A549 (cell line): ENCODE measurements at regions of chr2 and their contacts with region 1.

Region 1: DNA sequence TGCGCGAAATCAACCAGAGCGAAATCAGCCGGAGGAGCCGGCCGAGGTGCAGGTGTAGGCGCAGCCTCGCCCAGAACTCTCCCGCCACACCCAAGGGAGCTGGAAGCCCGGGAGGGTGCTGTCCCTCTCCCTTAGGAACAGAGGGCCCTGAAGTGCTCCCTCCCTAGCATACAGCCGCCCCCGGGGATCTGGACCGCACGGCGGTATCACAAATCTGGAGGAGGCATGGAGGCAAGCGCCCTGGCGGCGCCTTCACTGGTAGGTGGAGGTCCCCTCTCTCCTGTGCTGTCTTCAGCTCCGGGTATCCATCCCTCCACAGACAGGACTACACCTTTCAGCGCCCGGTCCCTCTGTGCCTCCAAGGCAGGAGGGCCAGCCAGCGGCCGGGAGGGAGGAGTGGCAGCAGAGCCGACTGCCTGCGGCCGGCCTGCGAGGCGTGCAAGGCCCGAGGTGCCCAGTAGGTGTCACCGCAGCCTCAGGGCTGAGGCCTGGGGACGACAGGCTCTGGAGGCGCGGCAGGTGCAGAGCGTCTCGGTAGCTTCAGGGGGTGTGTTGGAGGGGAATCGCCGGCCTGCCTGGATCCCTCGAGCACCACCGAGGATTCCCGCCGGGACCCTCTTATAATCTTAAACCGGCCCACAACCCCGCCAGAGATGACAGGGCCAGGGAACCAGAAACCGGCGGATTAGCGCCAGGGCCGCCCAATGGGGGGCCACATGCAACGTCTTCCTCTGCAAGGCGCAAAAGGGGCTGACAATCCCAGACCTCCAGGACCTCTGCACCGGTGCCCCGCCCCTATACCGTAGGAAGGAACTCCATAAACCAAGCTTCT is 2.8 kb downstream of the IHH start:
- DNase-seq: peak in 1 of 2 experiments; percentile 60
- ATAC-seq: peak; percentile 72 to 86
- H3K4me3 ChIP-seq: peak overlapping the region; percentile 53; the same call in 2 of the 3 replicates
- H3K27ac ChIP-seq: no peak overlapping the region
- H3K4me1 ChIP-seq: peaks cover 26% of the 10 kb centered on the region
- CTCF ChIP-seq: peak; percentile 80
- EP300 ChIP-seq: no peak
- POLR2A ChIP-seq: no peak
- RAD21 ChIP-seq: peak; percentile 80 to 91

Region 2: GRCh38 chr2:219002395-219003266 is 55.3 kb before region 1 on chr2:
- CTCF ChIA-PET with region 1: interaction called, 38 read pairs
- POLR2A ChIA-PET with region 1: no interaction called
- DNase-seq: peak; percentile 82 to 93
- ATAC-seq: peak; percentile 84 to 93
- H3K4me3 ChIP-seq: peak overlapping the region; percentile 59
- H3K27ac ChIP-seq: peak overlapping the region; percentile 64 to 83
- H3K4me1 ChIP-seq: peaks cover 7% of the 10 kb centered on the region
- CTCF ChIP-seq: peak; percentile 68
- EP300 ChIP-seq: no peak
- POLR2A ChIP-seq: peak; percentile 52
- RAD21 ChIP-seq: 0 out of 5 replicates have a peak, but pooled peaks have one; percentile 17 to 19

Region 3: DNA sequence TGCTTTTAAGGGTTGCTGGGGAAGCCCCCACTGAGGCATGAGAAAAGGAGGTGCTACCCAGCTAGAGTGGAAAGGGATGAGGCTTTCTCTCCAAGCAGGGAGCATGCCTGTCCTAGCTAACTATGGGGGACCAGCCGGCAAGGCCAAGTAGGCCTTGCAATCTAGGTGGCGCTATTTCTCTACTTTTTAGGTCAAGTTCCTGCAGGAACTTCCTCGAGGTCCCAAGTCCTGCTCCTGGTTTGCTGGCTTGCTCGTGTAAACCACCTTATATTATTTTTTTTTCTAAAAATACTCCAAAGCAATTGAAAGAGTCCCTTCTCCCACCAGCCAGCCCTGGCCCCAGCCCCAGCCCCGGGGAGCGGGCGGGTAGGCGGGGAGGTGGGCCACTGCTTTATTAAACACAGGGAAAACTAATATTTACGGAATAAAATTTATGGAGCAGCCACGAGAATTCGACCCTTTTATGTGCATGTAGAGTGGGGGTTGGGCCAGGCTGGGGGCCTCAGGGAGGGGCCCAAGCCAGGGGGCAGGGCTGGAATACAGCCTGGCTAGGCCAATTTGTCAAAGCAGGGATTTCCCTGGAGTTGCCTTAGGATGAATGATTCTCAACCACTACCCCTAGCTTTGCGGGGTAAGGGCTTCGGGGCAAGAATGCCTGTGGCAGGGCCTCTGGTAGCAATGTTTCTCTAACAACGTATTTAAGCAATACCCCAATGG is 15.6 kb after region 1 on chr2:
- CTCF ChIA-PET with region 1: interaction called, 182 read pairs
- POLR2A ChIA-PET with region 1: no interaction called
- DNase-seq: peak; percentile 26 to 73
- ATAC-seq: peak; percentile 68 to 92; a peak in 4 of 6 replicates
- H3K4me3 ChIP-seq: no peak overlapping the region
- H3K27ac ChIP-seq: no peak overlapping the region
- H3K4me1 ChIP-seq: no peaks in the 10 kb centered on the region
- CTCF ChIP-seq: peak; percentile 65
- EP300 ChIP-seq: no peak
- POLR2A ChIP-seq: no peak
- RAD21 ChIP-seq: peak; percentile 59 to 63

Region 4: GRCh38 chr2:219099329-219099728 is 41.4 kb after region 1 on chr2:
- CTCF ChIA-PET with region 1: interaction called, 13 read pairs
- POLR2A ChIA-PET with region 1: interaction called, 3 read pairs
- DNase-seq: no peak
- ATAC-seq: no peak
- H3K4me3 ChIP-seq: no peak overlapping the region
- H3K27ac ChIP-seq: no peak overlapping the region
- H3K4me1 ChIP-seq: no peaks in the 10 kb centered on the region
- CTCF ChIP-seq: no peak
- EP300 ChIP-seq: no peak
- POLR2A ChIP-seq: no peak
- RAD21 ChIP-seq: no peak

Region 5: DNA sequence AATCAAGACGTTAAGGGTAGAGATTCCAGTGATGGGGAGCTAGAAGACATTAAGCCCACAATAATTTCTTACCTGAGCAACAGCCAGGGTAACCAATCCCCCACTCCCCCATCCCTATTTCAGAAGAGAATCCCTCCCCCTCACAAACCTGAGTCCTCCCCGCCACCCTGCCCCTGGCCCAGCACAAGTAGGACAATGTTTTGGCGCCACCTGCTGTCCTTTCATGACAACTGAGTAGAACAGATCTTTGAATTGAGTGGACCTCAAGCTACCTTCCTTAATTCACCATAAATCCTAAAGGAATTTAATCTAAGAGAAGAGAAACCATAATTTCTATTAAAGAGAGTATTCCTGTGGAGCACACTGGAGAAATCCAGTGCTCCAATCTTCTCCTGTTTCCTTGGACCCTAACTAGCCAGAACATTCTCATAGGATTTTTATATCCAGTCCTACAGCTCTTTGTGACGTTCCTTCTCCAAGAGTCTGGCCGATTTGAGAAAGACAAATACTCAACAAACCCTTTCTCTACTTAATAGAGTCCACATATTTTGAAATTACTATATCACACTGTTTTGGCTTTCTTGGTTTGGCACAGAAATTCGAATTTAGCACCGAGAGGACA is 61.6 kb after region 1 on chr2:
- CTCF ChIA-PET with region 1: interaction called, 173 read pairs
- POLR2A ChIA-PET with region 1: no interaction called
- DNase-seq: peak; percentile 45 to 62
- ATAC-seq: peak; percentile 83 to 96
- H3K4me3 ChIP-seq: no peak overlapping the region
- H3K27ac ChIP-seq: no peak overlapping the region
- H3K4me1 ChIP-seq: peaks cover 7% of the 10 kb centered on the region
- CTCF ChIP-seq: peak; percentile 83
- EP300 ChIP-seq: no peak
- POLR2A ChIP-seq: no peak
- RAD21 ChIP-seq: peak; percentile 81 to 84

Region 6: GRCh38 chr2:219160186-219161017 is 102.5 kb after region 1 on chr2 and contains the start of gene NHEJ1:
- CTCF ChIA-PET with region 1: interaction called, 332 read pairs
- POLR2A ChIA-PET with region 1: no interaction called
- DNase-seq: peak; percentile 94 to 95
- ATAC-seq: peak; percentile 94 to 96
- H3K4me3 ChIP-seq: peak within 1 kb of the TSS; percentile 54
- H3K27ac ChIP-seq: peak within 1 kb of the TSS; percentile 91 to 95
- H3K4me1 ChIP-seq: peaks cover 9% of the 10 kb centered on the region
- CTCF ChIP-seq: peak; percentile 95
- EP300 ChIP-seq: no peak
- POLR2A ChIP-seq: peak; percentile 80
- RAD21 ChIP-seq: peak; percentile 85 to 91
- polyA plus RNA-seq, gene NHEJ1: 31.8 and 34.7 TPM in 2 replicates

Region 7: GRCh38 chr2:219245148-219245898 is 187.4 kb after region 1 on chr2 and contains the starts of genes GLB1L and STK16:
- CTCF ChIA-PET with region 1: no interaction called
- POLR2A ChIA-PET with region 1: no interaction called
- DNase-seq: peak; percentile 94
- ATAC-seq: peak; percentile 64 to 82
- H3K4me3 ChIP-seq: peak within 1 kb of the TSS; percentile 78
- H3K27ac ChIP-seq: peak within 1 kb of the TSS; percentile 90 to 96
- H3K4me1 ChIP-seq: peaks cover 50% of the 10 kb centered on the region
- CTCF ChIP-seq: no peak
- EP300 ChIP-seq: no peak
- POLR2A ChIP-seq: peak; percentile 74
- RAD21 ChIP-seq: no peak; a peak in 1 of 5 replicates
- polyA plus RNA-seq, gene GLB1L: 8.7 and 10.0 TPM in 2 replicates
- polyA plus RNA-seq, gene STK16: 43.3 and 53.0 TPM in 2 replicates

Region 8: GRCh38 chr2:219278655-219279516 is 221.0 kb after region 1 on chr2 and contains the start of gene DNAJB2:
- CTCF ChIA-PET with region 1: no interaction called
- POLR2A ChIA-PET with region 1: no interaction called
- DNase-seq: peak; percentile 97
- ATAC-seq: peak; percentile 74 to 85
- H3K4me3 ChIP-seq: peak within 1 kb of the TSS; percentile 66
- H3K27ac ChIP-seq: peak within 1 kb of the TSS; percentile 96 to 99
- H3K4me1 ChIP-seq: peaks cover 58% of the 10 kb centered on the region
- CTCF ChIP-seq: no peak
- EP300 ChIP-seq: peak; percentile 29 to 75; a peak in 1 of 5 replicates
- POLR2A ChIP-seq: peak; percentile 52
- RAD21 ChIP-seq: no peak; a peak in 1 of 5 replicates
- polyA plus RNA-seq, gene DNAJB2: 25.6 and 31.0 TPM in 2 replicates